Mammary epithelial cell (primary cell): ENCODE measurements at regions of chr6 and their contacts with region 1.

Region 1: DNA sequence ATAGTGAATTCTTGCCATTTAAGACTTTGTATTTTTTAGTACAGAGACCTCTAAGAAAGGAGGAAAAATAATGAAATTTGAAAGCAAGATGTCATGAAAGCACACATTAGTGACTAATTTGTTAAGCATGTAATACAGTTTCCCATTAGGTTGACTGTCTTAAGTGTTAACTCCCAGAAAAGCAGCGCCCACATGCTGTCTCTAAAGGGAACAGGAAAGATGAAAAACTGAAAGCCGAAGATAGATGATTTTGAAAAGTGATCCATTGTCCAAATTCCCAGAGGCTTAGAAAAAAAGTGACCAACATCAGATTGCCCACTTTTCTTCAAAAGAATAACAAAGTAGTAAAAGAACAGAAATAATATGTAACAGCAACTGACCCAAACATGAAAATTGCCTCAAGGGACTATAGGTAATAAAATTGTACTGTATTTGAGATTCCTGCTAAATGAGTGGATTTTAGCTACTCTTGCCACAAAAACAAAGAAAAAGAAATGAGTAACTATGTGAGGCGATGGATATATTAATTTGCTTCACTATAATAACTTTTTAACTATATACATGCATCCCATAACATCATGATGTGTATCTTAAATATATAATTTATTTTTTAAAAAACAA is 83.2 kb upstream of the OGFRL1 start:
- DNase-seq: peak; percentile 30
- H3K4me3 ChIP-seq: peak overlapping the region in 1 of 3 experiments; percentile 12
- H3K27ac ChIP-seq: no peak overlapping the region
- H3K4me1 ChIP-seq: peaks cover 10% of the 10 kb centered on the region
- H3K27me3 ChIP-seq: no peaks in the 10 kb centered on the region
- CTCF ChIP-seq: peak in 1 of 2 donors; percentile 15

Region 2: DNA sequence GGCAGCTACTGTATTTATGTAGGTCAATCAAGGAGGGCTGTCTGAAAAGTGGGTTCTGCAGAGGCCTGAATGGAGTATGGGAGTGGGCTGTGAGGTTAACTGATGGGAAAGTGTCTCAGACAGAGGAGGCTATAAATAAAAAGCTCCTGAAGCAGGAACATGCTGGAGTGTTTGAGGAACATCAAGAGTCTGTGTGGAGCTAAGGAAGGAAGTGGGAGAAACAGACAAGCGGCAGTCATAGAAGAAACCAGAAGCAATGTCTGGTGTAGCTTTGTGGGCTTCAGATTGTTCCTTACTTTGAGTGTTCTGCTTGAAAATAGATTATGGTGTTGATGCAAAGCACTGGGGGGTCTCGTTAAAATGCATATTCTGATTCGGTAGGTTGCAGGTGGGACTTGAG is 18.3 kb before region 1 on chr6:
- CTCF ChIA-PET with region 1: no interaction called
- dilution Hi-C with region 1: no loop called
- in situ Hi-C with region 1: no loop called
- intact Hi-C with region 1: no loop called
- DNase-seq: no peak
- H3K4me3 ChIP-seq: no peak overlapping the region
- H3K27ac ChIP-seq: no peak overlapping the region
- H3K4me1 ChIP-seq: peaks cover 13% of the 10 kb centered on the region
- H3K27me3 ChIP-seq: no peaks in the 10 kb centered on the region
- CTCF ChIP-seq: no peak

Region 3: GRCh38 chr6:71333697-71334096 is 128.3 kb after region 1 on chr6:
- CTCF ChIA-PET with region 1: no interaction called
- dilution Hi-C with region 1: no loop called
- in situ Hi-C with region 1: loop called in 1 of 2 experiments (anchors 5 kb)
- intact Hi-C with region 1: no loop called
- DNase-seq: peak; percentile 92
- H3K4me3 ChIP-seq: no peak overlapping the region
- H3K27ac ChIP-seq: peak overlapping the region; percentile 51
- H3K4me1 ChIP-seq: peaks cover 13% of the 10 kb centered on the region
- H3K27me3 ChIP-seq: no peaks in the 10 kb centered on the region
- CTCF ChIP-seq: no peak